Activated CD4-positive, alpha-beta T cell treated with anti-CD3 and anti-CD28 coated beads for 36 hours (primary cell): ENCODE measurements at regions of chr1 and their contacts with region 1.

Region 1: DNA sequence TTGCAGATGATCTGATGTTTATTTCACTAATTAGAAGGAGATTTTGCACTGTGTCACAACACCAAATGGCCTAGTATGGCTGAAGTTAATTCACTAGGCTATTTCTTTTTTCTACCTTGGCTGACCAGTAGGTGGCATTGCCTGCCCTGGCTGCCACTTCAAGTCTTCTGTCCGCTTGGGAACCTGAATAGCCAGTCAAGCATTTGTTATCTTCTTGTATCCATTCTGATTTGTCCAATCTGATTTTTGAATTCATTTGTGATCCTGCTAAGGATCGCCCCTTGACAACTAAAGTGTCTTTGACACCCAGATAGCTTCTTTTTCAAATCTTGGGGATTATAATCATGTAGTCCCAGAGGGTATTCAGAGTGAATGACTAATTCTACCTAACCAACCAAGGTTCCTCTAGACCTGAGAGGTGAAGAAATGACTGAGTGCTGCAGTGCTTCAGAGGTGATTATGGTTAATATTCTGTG is 99.4 kb downstream of the GIPC2 start:
- DNase-seq: peak; percentile 60
- ATAC-seq: peak; percentile 70
- H3K4me3 Mint-ChIP-seq: no peak overlapping the region
- H3K27ac Mint-ChIP-seq: no peak overlapping the region
- H3K4me1 Mint-ChIP-seq: peaks cover 17% of the 10 kb centered on the region
- H3K27me3 Mint-ChIP-seq: peaks cover 2% of the 10 kb centered on the region

Region 2: DNA sequence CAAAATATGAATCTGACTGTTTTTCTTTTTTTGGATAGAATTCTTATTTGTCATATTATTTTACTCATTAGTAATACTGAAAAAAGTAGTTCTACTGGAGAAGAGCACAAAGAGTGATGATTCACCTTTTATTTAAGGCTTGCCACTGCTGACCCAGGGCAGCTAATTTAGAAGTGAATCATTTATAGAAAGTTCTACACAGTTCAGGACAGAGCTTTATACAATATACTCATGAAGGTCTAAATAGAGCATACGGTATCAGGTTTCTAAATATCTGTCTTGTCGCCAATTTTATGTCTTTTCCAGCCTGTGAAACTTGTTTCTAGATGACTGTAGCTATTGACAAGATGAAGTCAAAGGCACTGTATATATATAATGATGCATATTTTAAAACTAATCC is 74.4 kb before region 1 on chr1:
- CTCF ChIA-PET with region 1: no interaction called
- POLR2A ChIA-PET with region 1: no interaction called
- intact Hi-C with region 1: no loop called
- DNase-seq: no peak
- ATAC-seq: peak; percentile 92
- H3K4me3 Mint-ChIP-seq: no peak overlapping the region
- H3K27ac Mint-ChIP-seq: no peak overlapping the region
- H3K4me1 Mint-ChIP-seq: peaks cover 3% of the 10 kb centered on the region
- H3K27me3 Mint-ChIP-seq: peaks cover 9% of the 10 kb centered on the region

Region 3: GRCh38 chr1:78132174-78132947 is 12.8 kb before region 1 on chr1:
- CTCF ChIA-PET with region 1: interaction called, 70 read pairs
- POLR2A ChIA-PET with region 1: no interaction called
- intact Hi-C with region 1: no loop called
- DNase-seq: no peak
- ATAC-seq: no peak
- H3K4me3 Mint-ChIP-seq: no peak overlapping the region
- H3K27ac Mint-ChIP-seq: no peak overlapping the region
- H3K4me1 Mint-ChIP-seq: no peaks in the 10 kb centered on the region
- H3K27me3 Mint-ChIP-seq: no peaks in the 10 kb centered on the region

Region 4: DNA sequence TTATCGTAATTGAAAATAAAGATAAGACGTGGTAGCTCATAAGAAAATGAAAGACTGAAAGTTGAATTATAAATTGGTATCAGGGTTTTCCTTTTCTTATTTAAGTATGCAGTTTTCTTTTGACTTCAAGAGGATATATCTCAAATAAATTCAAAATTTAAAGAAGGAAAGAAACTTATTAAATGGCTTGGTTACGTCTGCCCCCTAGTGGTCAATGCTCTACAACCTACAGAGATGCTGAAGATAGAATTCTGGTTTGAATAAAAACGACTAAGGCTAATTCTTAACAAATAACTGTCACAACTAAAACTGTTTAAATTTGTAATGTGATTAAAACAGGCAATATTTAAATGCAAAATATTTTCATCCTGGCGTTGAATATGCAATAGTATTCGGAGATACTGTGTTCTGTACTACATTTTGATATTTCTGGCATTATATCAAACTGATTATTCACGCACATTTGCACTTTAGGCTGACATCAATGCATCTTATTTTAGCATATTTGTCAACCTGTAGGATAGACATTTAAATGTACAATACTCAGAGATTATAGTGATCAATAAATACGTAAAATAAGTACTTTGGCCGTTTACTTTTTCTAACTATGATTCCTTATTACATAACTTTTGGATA is 531.3 kb after region 1 on chr1:
- CTCF ChIA-PET with region 1: interaction called, 4 read pairs
- POLR2A ChIA-PET with region 1: no interaction called
- intact Hi-C with region 1: loop called (anchors 1 kb)
- DNase-seq: peak; percentile 72
- ATAC-seq: no peak
- H3K4me3 Mint-ChIP-seq: no peak overlapping the region
- H3K27ac Mint-ChIP-seq: no peak overlapping the region
- H3K4me1 Mint-ChIP-seq: peaks cover 7% of the 10 kb centered on the region
- H3K27me3 Mint-ChIP-seq: peaks cover 2% of the 10 kb centered on the region